SK-MEL-5 (cell line): ENCODE measurements at regions of chr17 and their contacts with region 1.

Region 1: DNA sequence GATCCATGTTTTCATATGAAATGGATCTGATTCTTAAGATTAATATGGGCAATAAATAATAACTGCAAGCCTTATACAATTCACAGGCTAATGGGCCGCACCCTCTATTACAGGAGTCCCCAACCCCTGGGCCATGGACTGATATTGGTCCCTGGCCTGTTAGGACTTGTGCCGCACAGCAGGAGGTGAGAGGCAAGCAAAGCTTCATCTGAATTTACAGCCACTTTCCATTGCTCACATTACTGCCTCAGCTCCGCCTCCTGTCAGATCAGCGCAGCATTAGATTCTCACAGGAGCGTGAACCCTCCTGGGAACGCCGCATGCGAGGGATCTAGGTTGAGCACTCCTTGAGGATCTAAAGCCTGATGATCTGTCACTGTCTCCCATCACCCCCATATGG is 26.8 kb downstream of the METTL16 start:
- DNase-seq: no peak

Region 2: GRCh38 chr17:2624292-2624731 is 139.4 kb after region 1 on chr17:
- in situ Hi-C with region 1: loop called (anchors 25 kb)
- DNase-seq: no peak